Breast epithelium (tissue), 4 donors: ENCODE measurements at regions of chr4 and their contacts with region 1.

Region 1: DNA sequence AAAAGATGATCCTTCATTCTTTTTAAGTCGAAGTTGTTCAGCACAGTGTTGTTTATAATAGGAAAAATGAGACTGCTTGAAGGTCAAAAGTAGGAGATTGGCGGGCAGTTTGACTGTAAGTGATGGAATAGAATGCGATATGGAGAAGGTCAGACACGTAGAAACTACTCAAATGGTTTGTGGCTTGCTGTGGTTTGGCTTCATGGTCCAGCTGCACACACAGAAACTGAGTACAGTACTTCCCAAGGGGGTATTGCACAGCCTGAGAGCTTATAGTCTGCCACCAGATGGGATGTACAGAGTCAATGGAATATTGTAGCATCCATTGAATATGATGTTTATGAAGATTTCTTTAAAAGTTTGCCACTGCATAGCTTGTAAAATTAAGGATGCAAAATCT is 41.1 kb upstream of the DKK2 start:
- DNase-seq: no peak
- H3K4me3 ChIP-seq: no peak overlapping the region
- H3K27ac ChIP-seq: no peak overlapping the region
- H3K4me1 ChIP-seq: no peaks in the 10 kb centered on the region
- H3K27me3 ChIP-seq: no peaks in the 10 kb centered on the region
- CTCF ChIP-seq: no peak
- POLR2A ChIP-seq: no peak

Region 2: GRCh38 chr4:107312366-107312765 is 235.2 kb after region 1 on chr4:
- intact Hi-C with region 1: loop called (anchors 5 kb)
- DNase-seq: no peak
- H3K4me3 ChIP-seq: no peak overlapping the region
- H3K27ac ChIP-seq: no peak overlapping the region
- H3K4me1 ChIP-seq: no peaks in the 10 kb centered on the region
- H3K27me3 ChIP-seq: no peaks in the 10 kb centered on the region
- CTCF ChIP-seq: no peak
- POLR2A ChIP-seq: no peak